BJ (cell line): ENCODE measurements at regions of chr1 and their contacts with region 1.

Region 1: GRCh38 chr1:171226747-171227370 is 21.4 kb upstream of the FMO1 start:
- DNase-seq: no peak
- H3K4me3 ChIP-seq: no peak overlapping the region
- H3K27me3 ChIP-seq: no peaks in the 10 kb centered on the region
- CTCF ChIP-seq: peak; percentile 77

Region 2: DNA sequence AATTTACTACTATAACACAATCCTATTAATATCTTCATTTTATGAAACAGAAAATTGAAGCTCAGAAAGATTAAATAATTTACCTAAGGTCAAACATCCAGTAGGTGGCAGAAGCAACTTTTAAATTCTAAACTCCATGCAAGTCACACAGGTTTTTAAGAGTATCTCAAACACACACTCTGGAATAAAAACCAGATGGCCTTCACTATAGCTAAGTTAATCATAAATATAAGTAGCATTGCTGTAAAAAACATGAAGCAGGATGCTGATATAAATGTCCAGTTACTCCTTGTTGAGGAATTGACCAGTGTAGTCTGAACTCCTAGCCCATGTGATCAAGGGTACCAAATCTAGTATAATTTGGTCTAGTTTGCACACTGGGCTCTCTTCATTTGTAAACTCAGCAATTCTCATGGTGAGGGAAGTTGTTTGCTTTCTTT is 145.5 kb before region 1 on chr1:
- CTCF ChIA-PET with region 1: interaction called, 49 read pairs
- POLR2A ChIA-PET with region 1: interaction called, 3 read pairs
- DNase-seq: peak; percentile 46
- H3K4me3 ChIP-seq: no peak overlapping the region
- H3K27me3 ChIP-seq: no peaks in the 10 kb centered on the region
- CTCF ChIP-seq: peak; percentile 42

Region 3: DNA sequence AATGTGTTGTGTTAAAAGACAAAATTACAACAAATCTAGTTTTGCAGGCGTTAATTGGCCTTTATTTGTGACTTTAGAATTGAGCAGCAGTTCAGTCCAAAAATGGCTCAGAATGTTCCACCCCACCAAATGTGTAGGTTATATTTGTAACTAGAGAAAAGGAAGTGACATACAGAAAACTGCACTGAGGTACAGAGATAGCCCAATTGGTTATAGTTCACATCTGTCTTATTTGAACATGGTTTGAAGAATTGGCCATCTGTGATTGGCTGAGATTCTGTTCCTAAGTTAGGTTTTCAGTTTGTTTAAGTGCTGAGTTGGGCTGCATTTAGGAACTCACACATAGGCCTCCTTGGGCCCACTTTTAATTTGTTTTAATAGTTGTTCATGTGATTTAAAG is 53.8 kb before region 1 on chr1:
- CTCF ChIA-PET with region 1: interaction called, 19 read pairs
- POLR2A ChIA-PET with region 1: no interaction called
- DNase-seq: no peak
- H3K4me3 ChIP-seq: no peak overlapping the region
- H3K27me3 ChIP-seq: no peaks in the 10 kb centered on the region
- CTCF ChIP-seq: no peak

Region 4: GRCh38 chr1:171245458-171246064 is 18.7 kb after region 1 on chr1:
- CTCF ChIA-PET with region 1: interaction called, 48 read pairs
- POLR2A ChIA-PET with region 1: no interaction called
- DNase-seq: no peak
- H3K4me3 ChIP-seq: no peak overlapping the region
- H3K27me3 ChIP-seq: no peaks in the 10 kb centered on the region; the same call in 1 of the 2 replicates
- CTCF ChIP-seq: peak; percentile 84

Region 5: DNA sequence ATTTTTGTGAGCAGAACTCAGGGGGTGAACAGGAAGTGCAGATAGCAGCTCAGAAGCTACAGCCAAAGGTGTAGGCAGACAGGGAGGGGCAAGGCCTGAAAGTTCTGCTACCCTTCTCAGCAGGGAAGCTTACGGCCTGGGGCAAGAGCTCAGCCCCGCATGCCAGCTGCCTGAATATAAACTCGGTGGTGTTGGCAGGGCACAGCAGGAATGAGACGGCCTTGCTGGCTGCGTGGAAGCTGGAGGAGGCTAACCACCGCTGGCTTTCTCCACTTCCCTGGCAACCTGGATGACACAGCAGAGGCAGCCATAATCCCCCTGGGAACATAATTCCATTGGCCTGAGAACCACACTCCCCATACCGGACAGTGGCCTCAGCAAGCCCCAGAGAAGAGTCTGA is 176.5 kb after region 1 on chr1:
- CTCF ChIA-PET with region 1: no interaction called
- POLR2A ChIA-PET with region 1: no interaction called
- DNase-seq: no peak
- H3K4me3 ChIP-seq: no peak overlapping the region
- H3K27me3 ChIP-seq: no peaks in the 10 kb centered on the region
- CTCF ChIP-seq: no peak

Region 6: GRCh38 chr1:171610385-171610784 is 383.5 kb after region 1 on chr1:
- CTCF ChIA-PET with region 1: no interaction called
- POLR2A ChIA-PET with region 1: no interaction called
- DNase-seq: no peak
- H3K4me3 ChIP-seq: no peak overlapping the region
- H3K27me3 ChIP-seq: no peaks in the 10 kb centered on the region
- CTCF ChIP-seq: no peak